ENCODE measurements at regions of chr12 and their contacts with region 1.

Region 1: GRCh38 chr12:28190321-28191050 is at the start of gene CCDC91:
- DNase-seq: peak; percentile 82 to 97 (median 88)
- ATAC-seq: peak; percentile 79
- H3K4me3 ChIP-seq: peak within 1 kb of the TSS; percentile 76
- H3K4me3 Mint-ChIP-seq: peak within 1 kb of the TSS; percentile 97
- H3K27ac ChIP-seq: peak within 1 kb of the TSS; percentile 98 to 99
- H3K27ac Mint-ChIP-seq: peak within 1 kb of the TSS; percentile 99
- H3K4me1 ChIP-seq: peaks cover 21% of the 10 kb centered on the region
- H3K4me1 Mint-ChIP-seq: peaks cover 65% of the 10 kb centered on the region
- H3K27me3 ChIP-seq: no peaks in the 10 kb centered on the region
- H3K27me3 Mint-ChIP-seq: no peaks in the 10 kb centered on the region
- CTCF ChIP-seq: no peak
- total RNA-seq, gene CCDC91: 52.9 to 55.3 TPM

Region 2: GRCh38 chr12:27243804-27244683 is 946.4 kb before region 1 on chr12 and contains the start of gene STK38L:
- CTCF ChIA-PET with region 1: no interaction called
- POLR2A ChIA-PET with region 1: no interaction called
- intact Hi-C with region 1: loop called in 1 of 2 experiments (anchors 10 kb)
- DNase-seq: peak; percentile 87 to 99 (median 94)
- ATAC-seq: peak; percentile 95
- H3K4me3 ChIP-seq: peak within 1 kb of the TSS; percentile 93
- H3K4me3 Mint-ChIP-seq: peak within 1 kb of the TSS; percentile 99
- H3K27ac ChIP-seq: peak within 1 kb of the TSS; percentile 60 to 77
- H3K27ac Mint-ChIP-seq: peak within 1 kb of the TSS; percentile 92
- H3K4me1 ChIP-seq: peaks cover 15% of the 10 kb centered on the region
- H3K4me1 Mint-ChIP-seq: peaks cover 64% of the 10 kb centered on the region
- H3K27me3 ChIP-seq: no peaks in the 10 kb centered on the region
- H3K27me3 Mint-ChIP-seq: no peaks in the 10 kb centered on the region
- CTCF ChIP-seq: no peak
- total RNA-seq, gene STK38L: 18.3 to 21.0 TPM

Region 3: GRCh38 chr12:27821259-27821973 is 369.1 kb before region 1 on chr12:
- CTCF ChIA-PET with region 1: no interaction called
- POLR2A ChIA-PET with region 1: no interaction called
- intact Hi-C with region 1: loop called in 1 of 2 experiments (anchors 10 kb)
- DNase-seq: peak in 9 of 14 experiments; percentile 5 to 78 (median 13)
- ATAC-seq: no peak
- H3K4me3 ChIP-seq: peak overlapping the region; percentile 40
- H3K4me3 Mint-ChIP-seq: peak overlapping the region; percentile 77
- H3K27ac ChIP-seq: peak overlapping the region in 1 of 2 donors; percentile 47
- H3K27ac Mint-ChIP-seq: peak overlapping the region; percentile 64
- H3K4me1 ChIP-seq: peaks cover 13% of the 10 kb centered on the region
- H3K4me1 Mint-ChIP-seq: peaks cover 31% of the 10 kb centered on the region
- H3K27me3 ChIP-seq: no peaks in the 10 kb centered on the region
- H3K27me3 Mint-ChIP-seq: no peaks in the 10 kb centered on the region
- CTCF ChIP-seq: peak; percentile 74

Region 4: GRCh38 chr12:28110329-28110728 is 80.2 kb before region 1 on chr12:
- CTCF ChIA-PET with region 1: no interaction called
- POLR2A ChIA-PET with region 1: no interaction called
- intact Hi-C with region 1: no loop called
- DNase-seq: no peak
- ATAC-seq: no peak
- H3K4me3 ChIP-seq: no peak overlapping the region
- H3K4me3 Mint-ChIP-seq: no peak overlapping the region
- H3K27ac ChIP-seq: no peak overlapping the region
- H3K27ac Mint-ChIP-seq: no peak overlapping the region
- H3K4me1 ChIP-seq: no peaks in the 10 kb centered on the region
- H3K4me1 Mint-ChIP-seq: no peaks in the 10 kb centered on the region
- H3K27me3 ChIP-seq: no peaks in the 10 kb centered on the region
- H3K27me3 Mint-ChIP-seq: no peaks in the 10 kb centered on the region
- CTCF ChIP-seq: no peak

Region 5: GRCh38 chr12:28223025-28223554 is 32.6 kb after region 1 on chr12:
- CTCF ChIA-PET with region 1: interaction called, 6 read pairs
- POLR2A ChIA-PET with region 1: interaction called, 31 read pairs
- intact Hi-C with region 1: no loop called
- DNase-seq: peak in 3 of 14 experiments; percentile 32 to 48 (median 41)
- ATAC-seq: peak; percentile 79
- H3K4me3 ChIP-seq: no peak overlapping the region
- H3K4me3 Mint-ChIP-seq: peak overlapping the region; percentile 79
- H3K27ac ChIP-seq: no peak overlapping the region
- H3K27ac Mint-ChIP-seq: peak overlapping the region; percentile 54
- H3K4me1 ChIP-seq: peaks cover 9% of the 10 kb centered on the region
- H3K4me1 Mint-ChIP-seq: peaks cover 59% of the 10 kb centered on the region
- H3K27me3 ChIP-seq: no peaks in the 10 kb centered on the region
- H3K27me3 Mint-ChIP-seq: no peaks in the 10 kb centered on the region
- CTCF ChIP-seq: no peak

Region 6: DNA sequence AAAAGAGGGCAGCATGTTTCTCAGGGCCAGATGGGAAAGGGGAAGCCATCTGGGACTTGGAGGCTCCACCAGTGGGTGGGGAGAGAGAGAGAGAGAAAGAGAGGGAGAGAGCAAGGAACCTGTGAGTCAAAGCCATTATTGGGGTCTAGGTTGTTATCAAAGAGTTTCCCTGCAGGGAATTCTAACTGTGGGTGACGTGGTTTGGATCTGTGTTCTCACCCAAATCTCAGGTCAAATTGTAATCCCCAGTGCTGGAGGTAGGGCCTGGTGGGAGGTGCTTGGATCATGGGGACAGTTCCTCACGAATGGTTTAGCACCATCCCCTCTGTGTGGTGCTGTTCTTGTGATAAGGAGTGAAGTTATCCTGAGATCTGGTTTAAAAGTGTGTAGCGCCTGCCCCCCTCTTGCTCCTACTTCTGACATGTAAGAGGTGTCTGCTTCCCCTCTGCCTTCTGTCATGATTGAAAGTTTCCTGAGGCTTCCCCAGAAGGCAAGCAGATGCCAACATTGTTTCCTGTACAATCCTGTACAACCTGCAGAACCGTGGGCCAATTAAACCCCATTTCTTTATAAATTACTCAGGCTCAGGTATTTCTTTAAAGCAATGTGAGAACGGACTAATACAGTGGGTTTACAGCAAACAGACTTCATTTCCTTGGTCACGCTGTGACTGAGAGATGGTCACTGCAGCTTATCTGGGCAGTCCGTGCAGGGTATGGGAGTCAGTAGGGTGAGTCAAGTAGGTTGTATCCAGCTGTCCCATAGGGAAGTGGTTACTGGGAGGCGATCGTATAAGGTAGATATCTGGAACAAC is 52.2 kb after region 1 on chr12:
- CTCF ChIA-PET with region 1: no interaction called
- POLR2A ChIA-PET with region 1: no interaction called
- intact Hi-C with region 1: no loop called
- DNase-seq: peak in 1 of 14 experiments; percentile 11
- ATAC-seq: no peak
- H3K4me3 ChIP-seq: no peak overlapping the region
- H3K4me3 Mint-ChIP-seq: no peak overlapping the region
- H3K27ac ChIP-seq: no peak overlapping the region
- H3K27ac Mint-ChIP-seq: no peak overlapping the region
- H3K4me1 ChIP-seq: peaks cover 3% of the 10 kb centered on the region
- H3K4me1 Mint-ChIP-seq: peaks cover 34% of the 10 kb centered on the region
- H3K27me3 ChIP-seq: no peaks in the 10 kb centered on the region
- H3K27me3 Mint-ChIP-seq: no peaks in the 10 kb centered on the region
- CTCF ChIP-seq: no peak

Region 7: DNA sequence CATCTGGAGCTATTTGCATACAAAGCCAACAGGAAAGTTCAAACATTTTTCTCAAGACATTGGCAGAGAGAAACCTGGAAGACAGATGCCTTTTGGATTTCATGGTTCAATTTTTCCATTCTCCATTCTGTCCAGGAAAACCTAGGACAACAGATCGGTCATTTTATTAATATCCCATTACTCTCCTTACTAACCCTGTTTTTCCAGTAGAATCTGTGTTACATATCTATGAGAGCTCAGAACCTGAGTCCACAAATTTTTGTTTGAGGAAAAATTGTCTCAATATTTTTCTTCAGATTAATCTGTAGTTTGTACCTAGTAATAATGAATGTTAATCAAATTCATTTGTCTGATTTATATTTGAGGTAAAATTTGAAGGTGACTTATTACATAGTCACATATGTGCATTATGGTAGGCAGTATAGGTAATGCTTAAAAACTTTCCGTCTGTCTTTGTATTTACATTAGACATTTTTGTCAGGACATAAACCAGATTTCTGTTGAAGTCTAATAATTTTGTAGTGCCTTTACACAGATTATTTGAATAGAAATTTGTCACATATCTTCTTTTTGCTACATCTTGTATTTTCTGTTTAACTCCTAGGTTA is 75.1 kb after region 1 on chr12:
- CTCF ChIA-PET with region 1: no interaction called
- POLR2A ChIA-PET with region 1: interaction called, 14 read pairs
- intact Hi-C with region 1: no loop called
- DNase-seq: no peak
- ATAC-seq: no peak
- H3K4me3 ChIP-seq: no peak overlapping the region
- H3K4me3 Mint-ChIP-seq: no peak overlapping the region
- H3K27ac ChIP-seq: no peak overlapping the region
- H3K27ac Mint-ChIP-seq: no peak overlapping the region
- H3K4me1 ChIP-seq: no peaks in the 10 kb centered on the region
- H3K4me1 Mint-ChIP-seq: no peaks in the 10 kb centered on the region
- H3K27me3 ChIP-seq: no peaks in the 10 kb centered on the region
- H3K27me3 Mint-ChIP-seq: no peaks in the 10 kb centered on the region
- CTCF ChIP-seq: no peak

Measured in CD4-positive, alpha-beta T cell (primary cell).